ENCODE measurements at regions of chr20 and their contacts with region 1.

Region 1: DNA sequence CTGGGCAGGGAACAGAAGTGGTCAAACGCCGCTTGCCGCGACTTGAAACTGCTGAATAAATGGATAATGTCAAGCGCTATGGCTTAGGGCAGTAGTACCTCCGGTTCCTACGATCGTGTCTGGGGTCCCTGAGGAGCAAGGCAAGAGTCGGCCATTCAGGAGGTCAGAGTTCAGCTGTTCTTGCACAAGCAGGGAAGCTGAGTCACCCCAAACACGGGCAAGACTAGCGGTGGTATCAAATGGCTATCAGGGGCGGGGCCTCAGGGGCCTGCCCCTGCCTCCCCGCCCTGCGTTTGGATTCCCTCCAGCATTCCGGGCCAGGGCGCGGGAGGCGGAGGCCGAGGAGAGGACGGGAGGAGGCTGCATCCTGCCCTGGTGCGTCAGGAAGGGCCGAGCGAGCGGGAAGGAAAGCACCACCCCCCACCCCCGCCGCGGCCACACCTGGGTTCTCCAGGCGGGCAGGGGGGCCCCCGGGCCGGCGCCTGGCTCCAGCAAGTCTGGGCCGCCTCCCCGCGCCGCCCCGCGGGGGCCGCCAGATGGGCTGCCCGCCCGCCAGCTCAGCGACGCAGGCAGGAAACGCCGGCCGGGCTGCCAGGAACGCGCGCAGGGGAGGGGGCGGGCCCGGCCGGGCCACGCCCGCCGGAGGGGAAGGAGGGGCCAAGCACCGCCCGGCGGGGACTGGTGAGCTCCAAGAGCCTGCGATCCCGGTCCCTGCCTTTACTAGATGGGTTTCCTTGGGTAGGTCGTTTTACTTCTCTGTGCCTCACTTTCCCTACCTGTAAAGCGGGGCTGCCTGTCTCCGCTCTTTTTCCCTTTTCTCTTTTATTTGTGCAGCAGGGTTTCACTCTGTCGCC is 32.2 kb upstream of the ID1 start:
- DNase-seq: peak; percentile 93
- H3K4me3 ChIP-seq: peak overlapping the region; percentile 50
- H3K27me3 ChIP-seq: no peaks in the 10 kb centered on the region
- CTCF ChIP-seq: no peak

Region 2: GRCh38 chr20:31560094-31560899 is 12.6 kb before region 1 on chr20:
- CTCF ChIA-PET with region 1: interaction called, 81 read pairs
- POLR2A ChIA-PET with region 1: no interaction called
- DNase-seq: peak; percentile 51
- H3K4me3 ChIP-seq: no peak overlapping the region
- H3K27me3 ChIP-seq: no peaks in the 10 kb centered on the region
- CTCF ChIP-seq: peak; percentile 93

Region 3: GRCh38 chr20:31595654-31596411 is 22.9 kb after region 1 on chr20:
- CTCF ChIA-PET with region 1: interaction called, 454 read pairs
- POLR2A ChIA-PET with region 1: interaction called, 6 read pairs
- DNase-seq: peak; percentile 95
- H3K4me3 ChIP-seq: no peak overlapping the region
- H3K27me3 ChIP-seq: no peaks in the 10 kb centered on the region
- CTCF ChIP-seq: no peak

Region 4: GRCh38 chr20:31630187-31630790 is 57.4 kb after region 1 on chr20:
- CTCF ChIA-PET with region 1: interaction called, 18 read pairs
- POLR2A ChIA-PET with region 1: no interaction called
- DNase-seq: no peak
- H3K4me3 ChIP-seq: no peak overlapping the region
- H3K27me3 ChIP-seq: no peaks in the 10 kb centered on the region
- CTCF ChIP-seq: no peak

Region 5: DNA sequence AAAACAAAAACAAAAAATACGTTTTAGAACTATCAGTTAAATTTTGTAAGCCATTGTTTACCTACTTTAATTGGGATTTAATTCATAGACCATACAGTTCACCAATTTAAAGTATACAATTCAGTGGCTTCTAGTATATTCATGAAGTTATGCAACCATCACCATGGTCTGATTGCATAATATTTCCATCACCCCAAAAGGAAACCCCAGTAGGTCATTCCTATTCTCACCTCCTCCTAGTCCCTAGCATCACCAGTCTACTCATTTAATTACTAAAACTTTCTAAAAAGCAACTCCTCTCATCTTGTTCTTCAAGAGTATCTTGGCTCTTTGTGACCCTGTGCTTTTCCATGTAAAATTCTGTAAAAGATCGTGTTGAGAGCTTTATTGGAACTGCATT is 845.4 kb after region 1 on chr20:
- CTCF ChIA-PET with region 1: no interaction called
- POLR2A ChIA-PET with region 1: interaction called, 12 read pairs
- DNase-seq: no peak
- H3K4me3 ChIP-seq: no peak overlapping the region
- H3K27me3 ChIP-seq: no peaks in the 10 kb centered on the region
- CTCF ChIP-seq: no peak

Measured in BJ (cell line).